MCF 10A (cell line): ENCODE measurements at regions of chr2 and their contacts with region 1.

Region 1: DNA sequence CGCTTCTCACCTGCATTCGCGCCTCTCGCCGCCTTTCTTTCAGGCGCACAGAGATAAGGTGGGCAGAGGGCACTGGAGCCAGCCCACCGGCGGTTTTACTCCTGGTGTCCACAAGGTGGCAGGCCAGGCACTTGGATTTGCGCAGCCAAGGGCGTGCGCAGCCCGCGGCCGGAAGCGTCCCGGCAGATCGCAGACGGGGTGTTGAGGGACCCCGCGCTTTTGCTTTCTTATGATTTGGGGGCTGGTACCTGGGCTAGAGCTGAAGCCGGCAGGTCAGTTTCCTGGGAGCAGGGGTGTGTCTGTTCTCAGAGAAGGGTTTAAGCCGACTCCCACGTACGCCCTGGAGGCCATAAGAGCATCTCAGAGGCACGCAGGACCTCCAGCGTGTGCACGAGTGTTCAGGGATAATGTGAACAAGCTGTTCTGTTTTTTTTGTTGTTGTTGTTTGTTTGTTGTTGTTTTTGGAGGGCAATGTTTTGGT is 305.6 kb upstream of the CXCR4 start:
- DNase-seq: peak; percentile 65
- H3K4me3 Mint-ChIP-seq: peak overlapping the region; percentile 74
- H3K27ac Mint-ChIP-seq: no peak overlapping the region
- H3K4me1 Mint-ChIP-seq: peaks cover 6% of the 10 kb centered on the region
- H3K27me3 Mint-ChIP-seq: peaks cover 60% of the 10 kb centered on the region
- CTCF ChIP-seq: peak; percentile 91

Region 2: DNA sequence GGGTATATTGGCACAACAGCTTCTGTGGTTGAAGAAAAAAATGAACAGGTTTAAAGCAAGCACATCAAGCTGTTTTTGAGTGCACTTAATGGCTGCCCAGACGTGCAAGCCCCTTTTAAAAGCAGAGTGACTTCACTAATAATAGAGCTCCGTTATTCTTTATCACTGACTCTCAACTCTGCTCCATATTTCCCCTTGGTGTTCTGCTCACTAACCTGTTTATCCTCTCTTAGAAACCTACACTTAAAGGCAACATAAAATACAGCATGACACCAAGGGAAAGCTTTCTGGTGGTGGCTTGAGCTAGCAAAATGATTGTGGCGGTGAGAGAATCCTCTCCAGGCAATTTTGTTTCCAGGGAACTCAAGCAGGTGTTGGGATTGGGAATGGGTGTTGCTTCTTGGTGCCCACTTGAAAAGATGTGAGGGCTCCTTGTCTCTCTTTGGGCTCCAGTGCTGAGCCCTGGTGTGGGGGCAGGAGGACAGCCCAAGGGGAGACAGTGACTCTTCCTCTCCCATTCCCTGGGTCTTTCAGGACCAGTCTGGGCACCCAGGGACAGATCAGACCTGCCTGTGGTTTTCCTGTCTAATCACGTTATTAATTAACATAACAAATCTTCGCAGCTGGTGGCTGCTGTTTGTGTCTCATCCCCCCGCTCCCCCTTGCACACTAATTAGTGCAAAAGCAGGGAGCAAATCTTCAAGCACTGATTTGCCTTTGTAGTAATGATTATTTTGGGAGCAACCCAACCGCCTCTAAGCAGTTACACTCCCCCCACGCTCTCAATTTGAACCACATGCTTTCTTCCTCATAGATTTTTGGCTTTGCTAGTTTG is 16.2 kb before region 1 on chr2:
- CTCF ChIA-PET with region 1: interaction called, 10 read pairs
- POLR2A ChIA-PET with region 1: no interaction called
- intact Hi-C with region 1: no loop called
- DNase-seq: no peak
- H3K4me3 Mint-ChIP-seq: no peak overlapping the region
- H3K27ac Mint-ChIP-seq: no peak overlapping the region
- H3K4me1 Mint-ChIP-seq: no peaks in the 10 kb centered on the region
- H3K27me3 Mint-ChIP-seq: peaks cover 90% of the 10 kb centered on the region
- CTCF ChIP-seq: no peak

Region 3: DNA sequence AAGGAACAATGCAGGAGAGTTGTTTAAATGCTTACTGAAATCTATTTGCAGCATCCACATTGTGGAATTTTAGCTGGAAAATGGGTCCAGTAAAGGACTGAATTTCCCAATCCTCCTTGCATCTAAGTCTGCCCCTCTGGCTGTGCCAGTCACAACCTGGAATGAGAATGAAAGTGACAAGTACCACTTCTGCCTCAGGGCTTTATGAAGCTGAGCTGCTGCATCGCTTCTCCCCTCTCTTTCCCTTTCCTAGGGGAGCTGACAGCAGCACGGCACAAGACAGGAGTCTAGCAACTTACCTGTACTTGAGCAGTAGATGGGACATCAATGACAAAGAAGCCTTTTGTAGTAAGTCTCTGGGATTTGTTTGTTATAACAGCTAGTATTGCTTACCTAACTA is 314.5 kb after region 1 on chr2:
- CTCF ChIA-PET with region 1: interaction called, 3 read pairs
- POLR2A ChIA-PET with region 1: no interaction called
- intact Hi-C with region 1: loop called (anchors 5 kb)
- DNase-seq: no peak
- H3K4me3 Mint-ChIP-seq: no peak overlapping the region
- H3K27ac Mint-ChIP-seq: no peak overlapping the region
- H3K4me1 Mint-ChIP-seq: peaks cover 6% of the 10 kb centered on the region
- H3K27me3 Mint-ChIP-seq: peaks cover 11% of the 10 kb centered on the region
- CTCF ChIP-seq: no peak

Region 4: GRCh38 chr2:137050949-137051348 is 627.4 kb after region 1 on chr2:
- CTCF ChIA-PET with region 1: interaction called, 8 read pairs
- POLR2A ChIA-PET with region 1: no interaction called
- intact Hi-C with region 1: loop called (anchors 2 kb)
- DNase-seq: peak; percentile 43
- H3K4me3 Mint-ChIP-seq: no peak overlapping the region
- H3K27ac Mint-ChIP-seq: no peak overlapping the region
- H3K4me1 Mint-ChIP-seq: no peaks in the 10 kb centered on the region
- H3K27me3 Mint-ChIP-seq: no peaks in the 10 kb centered on the region
- CTCF ChIP-seq: peak; percentile 20

Region 5: DNA sequence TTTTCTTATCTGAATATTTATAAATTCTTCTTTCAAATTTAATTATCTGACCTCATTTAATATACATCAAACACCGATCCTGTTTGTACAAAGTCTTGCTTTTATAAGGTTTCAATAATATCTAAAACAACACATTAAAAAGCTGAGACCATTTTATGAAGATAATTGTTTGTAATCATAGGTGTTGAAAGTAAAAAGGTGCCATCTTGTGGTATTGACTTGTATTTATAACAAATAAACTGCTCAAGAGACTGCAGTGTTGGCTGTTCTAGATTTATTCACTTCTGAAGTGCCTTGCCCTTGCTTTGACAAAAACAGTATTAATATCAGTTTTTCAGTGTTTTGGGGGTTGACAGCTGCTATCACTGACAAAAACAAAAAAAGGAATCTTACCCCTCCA is 1253.9 kb after region 1 on chr2:
- CTCF ChIA-PET with region 1: interaction called, 19 read pairs
- POLR2A ChIA-PET with region 1: no interaction called
- intact Hi-C with region 1: loop called (anchors 5 kb)
- DNase-seq: no peak
- H3K4me3 Mint-ChIP-seq: no peak overlapping the region
- H3K27ac Mint-ChIP-seq: no peak overlapping the region
- H3K4me1 Mint-ChIP-seq: no peaks in the 10 kb centered on the region
- H3K27me3 Mint-ChIP-seq: no peaks in the 10 kb centered on the region
- CTCF ChIP-seq: no peak